Left cardiac atrium (tissue), 4 donors: ENCODE measurements at regions of chr21 and their contacts with region 1.

Region 1: DNA sequence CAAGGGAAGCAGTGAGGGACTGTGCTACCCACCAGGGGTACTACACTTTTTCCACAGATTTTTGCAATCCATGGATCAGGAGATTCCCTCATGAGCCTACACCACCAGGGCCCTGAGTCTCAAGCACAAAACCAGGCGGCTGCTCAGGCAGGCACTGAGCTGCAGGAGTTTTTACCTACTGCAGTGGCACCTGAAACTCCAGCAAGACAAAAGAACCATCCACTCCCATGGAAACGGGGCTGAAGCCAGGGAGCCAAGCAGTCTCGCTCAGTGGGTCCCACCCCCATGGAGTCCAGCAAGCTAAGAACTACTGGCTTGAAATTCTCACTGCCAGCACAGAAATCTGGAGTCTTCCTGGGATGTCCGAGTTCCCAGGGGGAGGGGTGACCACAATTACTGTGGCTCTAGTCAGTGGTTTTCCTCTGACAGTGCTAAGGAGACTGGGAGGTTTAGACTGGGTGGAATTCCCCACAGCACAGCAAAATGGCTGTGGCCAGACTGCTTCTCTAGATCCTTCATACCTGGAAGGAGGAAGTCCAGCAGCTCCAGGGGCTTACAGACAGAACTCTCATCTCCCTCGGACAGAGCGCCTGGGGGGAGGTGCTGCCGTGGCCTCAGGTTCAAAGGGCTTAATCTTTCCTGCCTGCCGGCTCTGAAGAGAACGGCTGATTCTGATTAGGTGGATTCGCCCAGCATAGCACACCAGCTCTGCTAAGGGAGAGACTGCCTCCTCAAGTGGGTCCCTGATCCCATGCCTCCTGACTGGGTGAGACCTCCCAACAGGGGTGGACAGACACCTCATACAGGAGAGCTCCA is 437.8 kb downstream of the LTN1 start:
- DNase-seq: no peak
- ATAC-seq: no peak

Region 2: DNA sequence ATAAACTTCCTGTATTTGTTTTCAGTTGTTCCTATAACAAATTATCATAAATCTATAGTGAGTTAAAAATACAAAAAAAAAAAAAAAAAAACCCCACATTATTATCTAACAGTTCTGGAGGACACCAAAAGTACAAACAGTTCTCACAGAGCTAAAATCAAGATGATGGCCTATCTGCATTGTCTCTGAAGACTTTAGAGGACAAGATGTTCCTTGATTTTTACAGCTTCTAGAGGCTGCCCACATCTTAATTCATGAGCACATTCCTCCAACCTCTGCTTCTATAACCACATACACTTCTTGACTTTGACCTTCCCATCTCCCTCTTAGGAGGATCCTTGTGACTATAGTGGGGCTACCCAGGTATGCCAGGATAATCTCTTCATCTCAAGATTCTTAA is 368.3 kb before region 1 on chr21:
- intact Hi-C with region 1: no loop called
- DNase-seq: no peak
- ATAC-seq: no peak

Region 3: GRCh38 chr21:28615276-28615675 is 60.4 kb after region 1 on chr21:
- intact Hi-C with region 1: loop called in 1 of 2 experiments (anchors 10 kb)
- DNase-seq: no peak
- ATAC-seq: no peak